ENCODE measurements at regions of chr16 and their contacts with region 1.

Region 1: GRCh38 chr16:69396187-69397061 is 10.6 kb upstream of the TERF2 start:
- DNase-seq: peak; percentile 86
- H3K4me3 ChIP-seq: peak overlapping the region; percentile 6
- CTCF ChIP-seq: peak; percentile 30

Region 2: GRCh38 chr16:69410285-69410990 is 14.0 kb after region 1 on chr16:
- CTCF ChIA-PET with region 1: interaction called, 60 read pairs
- POLR2A ChIA-PET with region 1: no interaction called
- DNase-seq: peak; percentile 9
- H3K4me3 ChIP-seq: no peak overlapping the region
- CTCF ChIP-seq: no peak

Region 3: DNA sequence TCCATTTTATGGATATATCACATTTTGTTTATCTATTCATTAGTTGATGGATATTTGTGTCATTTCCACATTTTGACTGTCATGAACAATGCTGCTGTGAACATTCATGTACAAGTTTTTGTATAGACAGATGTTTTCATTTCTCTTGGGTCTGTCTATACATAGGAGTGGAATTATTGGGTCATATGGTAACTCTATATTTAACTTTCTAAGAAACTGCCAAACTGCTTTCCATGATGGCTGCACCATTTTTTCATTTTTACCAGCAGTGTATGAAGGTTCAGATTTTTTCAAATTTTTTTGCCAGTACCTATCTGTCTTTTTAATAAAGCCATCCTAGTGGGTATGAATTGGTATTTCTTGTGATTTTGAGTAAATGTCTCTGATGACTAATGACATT is 184.9 kb after region 1 on chr16:
- CTCF ChIA-PET with region 1: interaction called, 10 read pairs
- POLR2A ChIA-PET with region 1: no interaction called
- DNase-seq: no peak
- H3K4me3 ChIP-seq: no peak overlapping the region
- CTCF ChIP-seq: no peak

Region 4: GRCh38 chr16:69703638-69704037 is 307.2 kb after region 1 on chr16:
- CTCF ChIA-PET with region 1: interaction called, 27 read pairs
- POLR2A ChIA-PET with region 1: no interaction called
- DNase-seq: no peak
- H3K4me3 ChIP-seq: no peak overlapping the region
- CTCF ChIP-seq: no peak

Region 5: GRCh38 chr16:69761983-69762813 is 365.8 kb after region 1 on chr16 and contains the start of gene WWP2:
- CTCF ChIA-PET with region 1: interaction called, 154 read pairs
- POLR2A ChIA-PET with region 1: no interaction called
- DNase-seq: no peak
- H3K4me3 ChIP-seq: peak within 1 kb of the TSS; percentile 89
- CTCF ChIP-seq: no peak